Left ventricle myocardium superior (tissue), 1 donor: ENCODE measurements at regions of chr18 and their contacts with region 1.

Region 1: GRCh38 chr18:21194871-21195771 is 46.9 kb upstream of the GREB1L start:
- DNase-seq: no peak
- ATAC-seq: no peak

Region 2: GRCh38 chr18:21444465-21445023 is 249.4 kb after region 1 on chr18:
- intact Hi-C with region 1: loop called (anchors 2 kb)
- DNase-seq: no peak
- ATAC-seq: peak; percentile 70

Region 3: GRCh38 chr18:21496277-21496835 is 301.2 kb after region 1 on chr18:
- intact Hi-C with region 1: no loop called
- DNase-seq: no peak
- ATAC-seq: no peak